Posterior vena cava (tissue), 2 donors: ENCODE measurements at regions of chr2 and their contacts with region 1.

Region 1: GRCh38 chr2:79860228-79861058 is 347.6 kb downstream of the CTNNA2 start:
- DNase-seq: no peak

Region 2: GRCh38 chr2:79771493-79771892 is 89.0 kb before region 1 on chr2:
- intact Hi-C with region 1: no loop called
- DNase-seq: no peak

Region 3: GRCh38 chr2:79835911-79836310 is 24.5 kb before region 1 on chr2:
- intact Hi-C with region 1: loop called in 1 of 2 experiments (anchors 1 kb)
- DNase-seq: no peak

Region 4: GRCh38 chr2:79887747-79888374 is 27.4 kb after region 1 on chr2:
- intact Hi-C with region 1: no loop called
- DNase-seq: no peak